CD4-positive, alpha-beta memory T cell (primary cell): ENCODE measurements at regions of chr20 and their contacts with region 1.

Region 1: DNA sequence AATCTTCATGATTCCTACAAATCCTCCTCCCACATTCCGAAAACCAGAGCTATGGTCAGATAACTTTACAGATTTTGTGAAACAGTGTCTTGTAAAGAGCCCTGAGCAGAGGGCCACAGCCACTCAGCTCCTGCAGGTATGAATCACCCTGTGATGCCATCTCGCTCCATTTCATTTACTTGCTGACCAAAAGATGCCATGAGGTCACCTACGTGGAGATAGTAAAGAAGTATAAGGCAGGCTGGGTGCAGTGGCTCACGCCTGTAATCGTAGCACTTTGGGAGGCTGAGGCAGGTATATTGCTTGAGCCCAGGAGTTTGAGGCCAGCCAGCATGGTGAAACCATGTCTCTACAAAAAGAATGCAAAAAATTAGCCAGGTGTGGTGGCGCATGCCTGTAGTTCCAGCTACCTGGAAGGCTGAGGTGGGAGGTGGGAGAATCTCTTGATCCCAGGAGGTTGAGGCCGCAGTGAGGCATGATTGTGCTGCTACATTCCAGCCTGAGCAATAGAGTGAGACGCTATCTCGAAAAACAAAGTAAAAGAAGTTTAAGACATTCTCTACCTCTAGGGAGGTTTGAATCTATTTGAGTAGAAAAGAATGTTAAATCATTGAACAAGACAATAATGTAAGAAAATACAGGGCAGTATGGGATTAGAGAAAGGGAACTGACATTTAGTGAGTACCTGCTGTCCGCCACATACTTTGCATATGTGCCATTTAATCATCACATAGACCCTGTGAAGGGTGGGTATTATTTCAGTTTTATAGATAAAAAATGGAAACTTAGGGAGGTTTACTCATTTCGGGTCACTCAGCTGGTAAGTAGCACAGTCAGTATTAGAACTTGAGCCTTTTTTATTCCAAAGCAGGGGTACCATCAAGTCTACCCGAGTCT is 31.1 kb downstream of the STK4 start:
- DNase-seq: no peak
- H3K4me3 ChIP-seq: no peak overlapping the region
- H3K4me3 Mint-ChIP-seq: peak overlapping the region in 2 of 8 donors; percentile 17 to 39
- H3K27ac ChIP-seq: no peak overlapping the region
- H3K27ac Mint-ChIP-seq: peak overlapping the region; percentile 11 to 90 (median 61)
- H3K4me1 ChIP-seq: peaks cover 60% of the 10 kb centered on the region
- H3K4me1 Mint-ChIP-seq: peaks cover 42 to 82% (median 62%) of the 10 kb centered on the region in 4 donors
- H3K27me3 ChIP-seq: no peaks in the 10 kb centered on the region
- H3K27me3 Mint-ChIP-seq: no peaks in the 10 kb centered on the region

Region 2: GRCh38 chr20:45036044-45036755 is 38.8 kb after region 1 on chr20:
- CTCF ChIA-PET with region 1: no interaction called
- POLR2A ChIA-PET with region 1: no interaction called
- intact Hi-C with region 1: loop called (anchors 5 kb)
- DNase-seq: peak in 1 of 5 donors; percentile 41
- H3K4me3 ChIP-seq: no peak overlapping the region
- H3K4me3 Mint-ChIP-seq: peak overlapping the region in 3 of 8 donors; percentile 2 to 47 (median 29)
- H3K27ac ChIP-seq: no peak overlapping the region
- H3K27ac Mint-ChIP-seq: peak overlapping the region; percentile 7 to 85 (median 69)
- H3K4me1 ChIP-seq: peaks cover 93% of the 10 kb centered on the region
- H3K4me1 Mint-ChIP-seq: peaks cover 61 to 89% (median 75%) of the 10 kb centered on the region in 4 donors
- H3K27me3 ChIP-seq: no peaks in the 10 kb centered on the region
- H3K27me3 Mint-ChIP-seq: no peaks in the 10 kb centered on the region

Region 3: DNA sequence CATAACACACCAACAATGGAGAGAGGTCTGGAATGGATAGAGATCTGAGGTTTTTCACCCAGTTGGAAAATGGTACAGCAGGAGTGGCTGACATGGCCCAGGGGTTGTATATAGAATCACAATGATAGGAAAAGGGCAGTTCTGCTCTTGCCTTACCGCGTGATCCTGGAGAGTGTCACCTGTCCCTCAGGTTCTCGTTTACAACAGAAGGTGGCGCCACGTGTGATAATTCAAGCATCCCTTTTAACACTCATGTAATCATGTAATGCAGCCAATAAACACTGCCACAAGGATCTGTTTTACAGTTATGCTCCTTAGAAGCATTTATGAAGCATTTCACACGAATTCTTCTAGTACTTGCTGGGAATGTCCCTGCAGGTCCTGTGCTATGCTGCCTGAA is 459.2 kb after region 1 on chr20:
- CTCF ChIA-PET with region 1: no interaction called
- POLR2A ChIA-PET with region 1: no interaction called
- intact Hi-C with region 1: no loop called
- DNase-seq: peak in 1 of 5 donors; percentile 19
- H3K4me3 ChIP-seq: no peak overlapping the region
- H3K4me3 Mint-ChIP-seq: no peak overlapping the region
- H3K27ac ChIP-seq: no peak overlapping the region
- H3K27ac Mint-ChIP-seq: peak overlapping the region in 1 of 7 donors; percentile 11
- H3K4me1 ChIP-seq: no peaks in the 10 kb centered on the region
- H3K4me1 Mint-ChIP-seq: no peaks in the 10 kb centered on the region
- H3K27me3 ChIP-seq: no peaks in the 10 kb centered on the region
- H3K27me3 Mint-ChIP-seq: no peaks in the 10 kb centered on the region